ENCODE measurements at regions of chr5 and their contacts with region 1.

Region 1: GRCh38 chr5:24110004-24110615 is 534.7 kb downstream of the CDH10 start:
- DNase-seq: peak in 1 of 2 experiments; percentile 14
- H3K4me3 ChIP-seq: no peak overlapping the region
- H3K4me3 Mint-ChIP-seq: no peak overlapping the region
- H3K27ac Mint-ChIP-seq: no peak overlapping the region
- H3K4me1 ChIP-seq: no peaks in the 10 kb centered on the region
- H3K4me1 Mint-ChIP-seq: no peaks in the 10 kb centered on the region
- H3K27me3 ChIP-seq: no peaks in the 10 kb centered on the region; the same call in 1 of the 2 replicates
- H3K27me3 Mint-ChIP-seq: no peaks in the 10 kb centered on the region
- CTCF ChIP-seq: peak; percentile 55 to 64

Region 2: DNA sequence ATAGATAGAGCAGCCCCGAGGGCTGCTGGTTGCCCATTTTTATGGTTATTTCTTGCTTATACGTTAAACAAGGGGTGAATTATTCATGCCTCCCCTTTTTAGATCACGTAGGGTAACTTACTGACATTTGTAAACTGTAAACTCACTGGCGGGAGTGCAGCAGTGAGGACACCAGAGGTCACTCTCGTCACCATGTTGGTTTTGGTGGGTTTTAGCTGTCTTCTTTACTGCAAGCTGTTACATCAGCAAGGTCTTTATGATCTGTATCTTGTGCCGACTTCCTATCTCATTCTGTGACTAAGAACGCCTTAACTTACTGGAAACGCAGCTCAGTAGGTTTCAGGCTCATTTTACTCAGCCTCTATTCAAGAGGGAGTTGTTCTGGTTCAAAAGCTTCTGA is 757.7 kb before region 1 on chr5:
- CTCF ChIA-PET with region 1: no interaction called
- POLR2A ChIA-PET with region 1: no interaction called
- intact Hi-C with region 1: loop called (anchors 5 kb)
- DNase-seq: peak in 1 of 2 experiments; percentile 47
- H3K4me3 ChIP-seq: no peak overlapping the region
- H3K4me3 Mint-ChIP-seq: no peak overlapping the region
- H3K27ac Mint-ChIP-seq: no peak overlapping the region
- H3K4me1 ChIP-seq: no peaks in the 10 kb centered on the region
- H3K4me1 Mint-ChIP-seq: no peaks in the 10 kb centered on the region
- H3K27me3 ChIP-seq: no peaks in the 10 kb centered on the region
- H3K27me3 Mint-ChIP-seq: peaks cover 3% of the 10 kb centered on the region
- CTCF ChIP-seq: peak in 1 of 2 experiments; percentile 31

Region 3: DNA sequence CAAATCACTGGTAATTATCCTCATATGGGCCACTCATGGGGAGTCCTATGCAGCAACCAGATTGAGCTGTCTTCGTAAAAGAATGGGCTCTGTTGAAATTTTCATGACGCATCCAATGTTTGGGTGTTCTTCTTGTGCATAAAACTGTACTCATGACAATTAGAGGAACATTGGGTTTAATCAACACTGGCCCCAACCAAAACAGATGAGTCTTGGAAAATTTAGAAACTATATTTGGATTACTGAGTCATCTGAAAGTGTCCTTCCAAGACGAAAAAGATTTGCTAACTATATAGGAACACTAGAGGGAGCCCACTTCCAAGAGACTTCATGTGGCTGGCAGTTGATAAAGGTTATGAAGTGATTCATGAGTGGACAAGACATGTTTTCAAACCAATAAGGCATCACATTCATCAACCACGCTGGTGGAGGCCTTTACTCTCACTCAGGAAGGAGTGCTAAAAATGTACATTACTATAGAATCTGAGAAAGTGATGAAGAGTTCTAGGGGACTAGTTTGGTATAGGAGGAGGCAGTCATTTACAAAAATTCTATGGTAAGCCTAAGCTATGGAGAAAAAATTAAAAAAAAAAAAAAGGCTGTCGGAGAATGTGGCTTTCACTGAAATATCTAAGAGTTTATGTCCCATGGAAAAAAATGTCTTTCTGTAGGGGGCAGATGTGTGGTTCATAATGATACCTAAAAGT is 289.2 kb before region 1 on chr5:
- CTCF ChIA-PET with region 1: no interaction called
- POLR2A ChIA-PET with region 1: no interaction called
- intact Hi-C with region 1: loop called (anchors 1 kb)
- DNase-seq: peak in 1 of 2 experiments; percentile 22
- H3K4me3 ChIP-seq: no peak overlapping the region
- H3K4me3 Mint-ChIP-seq: no peak overlapping the region
- H3K27ac Mint-ChIP-seq: no peak overlapping the region
- H3K4me1 ChIP-seq: no peaks in the 10 kb centered on the region
- H3K4me1 Mint-ChIP-seq: no peaks in the 10 kb centered on the region
- H3K27me3 ChIP-seq: no peaks in the 10 kb centered on the region
- H3K27me3 Mint-ChIP-seq: peaks cover 2% of the 10 kb centered on the region
- CTCF ChIP-seq: peak; percentile 49 to 56

Region 4: DNA sequence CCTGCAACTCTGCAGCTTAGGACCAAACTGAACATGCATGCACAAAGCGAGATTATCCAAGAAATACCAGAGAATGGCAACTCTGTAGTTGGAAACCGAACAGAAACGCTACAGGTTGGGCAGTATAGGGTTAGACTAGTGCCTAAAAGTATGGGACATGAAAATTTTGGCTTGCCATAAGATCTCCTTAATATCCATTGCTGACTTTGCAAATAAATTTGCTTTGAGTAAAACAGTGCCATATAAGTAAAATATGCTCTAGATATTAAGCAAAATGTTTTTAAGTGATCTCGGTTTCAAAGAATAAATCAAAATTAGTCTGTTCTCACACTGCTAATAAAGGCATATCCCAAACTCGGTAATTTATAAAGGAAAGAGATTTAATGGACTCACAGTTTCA is 146.7 kb before region 1 on chr5:
- CTCF ChIA-PET with region 1: no interaction called
- POLR2A ChIA-PET with region 1: no interaction called
- intact Hi-C with region 1: no loop called
- DNase-seq: no peak
- H3K4me3 ChIP-seq: no peak overlapping the region
- H3K4me3 Mint-ChIP-seq: no peak overlapping the region
- H3K27ac Mint-ChIP-seq: no peak overlapping the region
- H3K4me1 ChIP-seq: no peaks in the 10 kb centered on the region
- H3K4me1 Mint-ChIP-seq: no peaks in the 10 kb centered on the region
- H3K27me3 ChIP-seq: no peaks in the 10 kb centered on the region
- H3K27me3 Mint-ChIP-seq: no peaks in the 10 kb centered on the region
- CTCF ChIP-seq: no peak

Region 5: GRCh38 chr5:23977997-23978396 is 132.1 kb before region 1 on chr5:
- CTCF ChIA-PET with region 1: no interaction called
- POLR2A ChIA-PET with region 1: no interaction called
- intact Hi-C with region 1: loop called (anchors 1 kb)
- DNase-seq: peak in 1 of 2 experiments; percentile 58
- H3K4me3 ChIP-seq: no peak overlapping the region
- H3K4me3 Mint-ChIP-seq: no peak overlapping the region
- H3K27ac Mint-ChIP-seq: no peak overlapping the region
- H3K4me1 ChIP-seq: no peaks in the 10 kb centered on the region
- H3K4me1 Mint-ChIP-seq: no peaks in the 10 kb centered on the region
- H3K27me3 ChIP-seq: no peaks in the 10 kb centered on the region
- H3K27me3 Mint-ChIP-seq: no peaks in the 10 kb centered on the region
- CTCF ChIP-seq: peak; percentile 19 to 29

Region 6: GRCh38 chr5:24005384-24005783 is 104.7 kb before region 1 on chr5:
- CTCF ChIA-PET with region 1: interaction called, 6 read pairs
- POLR2A ChIA-PET with region 1: no interaction called
- intact Hi-C with region 1: loop called (anchors 1 kb)
- DNase-seq: no peak
- H3K4me3 ChIP-seq: no peak overlapping the region
- H3K4me3 Mint-ChIP-seq: no peak overlapping the region
- H3K27ac Mint-ChIP-seq: no peak overlapping the region
- H3K4me1 ChIP-seq: no peaks in the 10 kb centered on the region
- H3K4me1 Mint-ChIP-seq: no peaks in the 10 kb centered on the region
- H3K27me3 ChIP-seq: no peaks in the 10 kb centered on the region
- H3K27me3 Mint-ChIP-seq: no peaks in the 10 kb centered on the region
- CTCF ChIP-seq: peak; percentile 3 to 15